ENCODE measurements at regions of chr9 and their contacts with region 1.

Region 1: GRCh38 chr9:89428901-89429890 is 68.7 kb downstream of the SEMA4D start:
- DNase-seq: peak; percentile 91
- H3K4me3 ChIP-seq: no peak overlapping the region
- H3K27ac ChIP-seq: no peak overlapping the region
- H3K4me1 ChIP-seq: peaks cover 71% of the 10 kb centered on the region
- CTCF ChIP-seq: peak; percentile 97

Region 2: DNA sequence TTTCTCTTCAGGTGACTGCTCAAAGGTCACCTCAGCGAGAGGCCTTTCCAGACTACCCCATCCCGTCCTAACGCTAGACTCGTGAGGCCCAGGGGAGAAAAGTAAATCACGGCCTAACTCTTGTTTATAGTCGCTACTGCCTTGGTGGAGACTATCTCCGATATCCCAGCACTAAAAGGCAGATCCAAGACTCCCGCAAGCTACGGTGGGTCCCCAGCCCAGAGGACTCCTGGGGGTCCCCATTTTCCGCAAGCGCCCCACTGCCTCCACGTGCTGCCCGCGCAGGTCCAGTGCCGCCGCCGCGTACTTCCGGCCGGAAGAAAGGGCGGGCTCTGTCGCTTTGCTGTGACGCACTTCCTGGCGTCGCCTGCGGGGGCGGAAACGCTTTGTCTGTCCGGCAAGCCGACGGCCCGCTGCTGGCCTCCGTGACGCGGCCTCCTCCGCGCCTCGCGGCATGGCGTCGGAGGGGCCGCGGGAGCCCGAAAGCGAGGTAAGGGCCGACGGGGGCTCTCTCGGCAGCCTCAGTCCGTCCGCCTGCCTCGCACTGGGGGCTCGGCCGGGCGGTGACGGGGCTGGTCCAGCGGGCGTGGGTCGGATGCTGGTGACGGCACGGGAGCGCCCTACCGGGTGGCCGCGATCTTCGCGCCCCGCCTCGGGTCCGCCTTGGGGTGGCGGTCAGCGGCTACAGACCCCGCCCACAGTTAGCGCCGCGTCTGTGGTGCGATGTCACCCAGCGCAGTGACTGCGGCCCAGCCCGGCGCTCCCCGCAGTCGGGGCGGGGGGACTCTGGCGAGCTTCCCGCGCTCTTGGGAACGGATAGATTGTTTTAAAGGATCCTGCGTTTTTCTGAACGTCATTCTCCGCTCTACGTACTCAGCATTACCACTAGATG is 110.8 kb before region 1 on chr9 and contains the start of gene SECISBP2:
- CTCF ChIA-PET with region 1: no interaction called
- POLR2A ChIA-PET with region 1: no interaction called
- intact Hi-C with region 1: loop called (anchors 2 kb)
- DNase-seq: peak; percentile 95
- H3K4me3 ChIP-seq: peak within 1 kb of the TSS; percentile 77
- H3K27ac ChIP-seq: peak within 1 kb of the TSS; percentile 88
- H3K4me1 ChIP-seq: peaks cover 63% of the 10 kb centered on the region
- CTCF ChIP-seq: no peak
- total RNA-seq, gene SECISBP2: 76.1 and 77.6 TPM in 2 replicates

Region 3: DNA sequence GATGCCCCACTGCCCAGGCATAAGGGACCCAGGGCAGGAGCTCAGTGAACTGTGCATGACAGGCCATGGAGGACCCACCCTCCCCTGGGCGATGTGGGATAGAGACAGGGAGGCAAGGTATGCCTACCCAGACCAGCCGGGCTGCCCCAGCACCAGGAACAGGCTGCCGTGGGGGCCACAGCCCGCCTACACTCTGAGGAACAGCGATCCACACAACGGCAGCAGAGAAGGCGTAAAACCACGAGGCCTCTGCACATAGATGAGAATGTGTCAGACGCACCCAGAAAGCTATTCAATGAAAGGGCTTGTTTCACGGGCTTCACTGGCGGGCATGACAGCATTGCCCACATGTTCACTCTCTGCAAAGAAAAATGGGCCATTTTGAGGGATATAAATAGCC is 19.2 kb after region 1 on chr9:
- CTCF ChIA-PET with region 1: interaction called, 19 read pairs
- POLR2A ChIA-PET with region 1: interaction called, 5 read pairs
- intact Hi-C with region 1: no loop called
- DNase-seq: no peak
- H3K4me3 ChIP-seq: no peak overlapping the region
- H3K27ac ChIP-seq: no peak overlapping the region
- H3K4me1 ChIP-seq: peaks cover 35% of the 10 kb centered on the region
- CTCF ChIP-seq: no peak

Region 4: DNA sequence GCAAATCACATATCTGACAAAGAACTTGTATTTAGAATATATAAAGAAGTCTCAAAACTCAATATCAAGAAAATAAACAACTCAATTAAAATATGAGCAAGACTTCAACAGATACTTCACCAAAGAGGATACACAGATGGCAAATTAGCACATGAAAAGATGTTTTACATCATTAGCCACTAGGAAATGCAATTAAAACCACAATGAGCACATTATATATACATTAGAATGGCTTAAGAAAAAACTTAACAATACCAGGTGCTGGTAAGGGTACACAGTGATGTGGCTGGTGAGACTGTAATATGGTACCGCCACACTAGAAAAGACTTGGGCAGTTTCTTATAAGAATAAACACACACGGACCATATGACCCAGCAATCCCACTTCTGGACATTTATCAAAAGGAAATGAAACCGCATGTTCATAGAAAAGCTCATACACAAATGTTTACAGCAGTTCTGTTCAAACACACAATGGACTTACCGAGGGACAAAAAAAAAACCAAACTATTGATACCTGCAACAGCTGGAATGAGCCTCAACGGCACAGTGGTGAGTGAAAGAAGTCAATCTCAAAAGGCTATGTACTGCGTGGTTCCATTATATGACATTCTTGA is 41.1 kb after region 1 on chr9:
- CTCF ChIA-PET with region 1: no interaction called
- POLR2A ChIA-PET with region 1: no interaction called
- intact Hi-C with region 1: no loop called
- DNase-seq: peak; percentile 13
- H3K4me3 ChIP-seq: no peak overlapping the region
- H3K27ac ChIP-seq: no peak overlapping the region
- H3K4me1 ChIP-seq: peaks cover 48% of the 10 kb centered on the region
- CTCF ChIP-seq: no peak

Region 5: GRCh38 chr9:89483592-89484522 is 54.7 kb after region 1 on chr9:
- CTCF ChIA-PET with region 1: no interaction called
- POLR2A ChIA-PET with region 1: no interaction called
- intact Hi-C with region 1: loop called (anchors 5 kb)
- DNase-seq: peak; percentile 72
- H3K4me3 ChIP-seq: peak overlapping the region; percentile 64
- H3K27ac ChIP-seq: no peak overlapping the region
- H3K4me1 ChIP-seq: peaks cover 60% of the 10 kb centered on the region
- CTCF ChIP-seq: no peak

Region 6: GRCh38 chr9:89497978-89498851 is 69.0 kb after region 1 on chr9 and contains the start of gene SEMA4D:
- CTCF ChIA-PET with region 1: interaction called, 3 read pairs
- POLR2A ChIA-PET with region 1: interaction called, 3 read pairs
- intact Hi-C with region 1: loop called (anchors 2 kb)
- DNase-seq: peak; percentile 67
- H3K4me3 ChIP-seq: peak within 1 kb of the TSS; percentile 83
- H3K27ac ChIP-seq: peak within 1 kb of the TSS; percentile 35
- H3K4me1 ChIP-seq: peaks cover 54% of the 10 kb centered on the region
- CTCF ChIP-seq: no peak
- total RNA-seq, gene SEMA4D: 28.5 and 33.7 TPM in 2 replicates

Region 7: GRCh38 chr9:89549031-89549644 is 119.9 kb after region 1 on chr9:
- CTCF ChIA-PET with region 1: interaction called, 45 read pairs
- POLR2A ChIA-PET with region 1: interaction called, 25 read pairs
- intact Hi-C with region 1: loop called (anchors 1 kb)
- DNase-seq: peak; percentile 85
- H3K4me3 ChIP-seq: no peak overlapping the region
- H3K27ac ChIP-seq: no peak overlapping the region
- H3K4me1 ChIP-seq: peaks cover 32% of the 10 kb centered on the region
- CTCF ChIP-seq: peak; percentile 99

Region 8: DNA sequence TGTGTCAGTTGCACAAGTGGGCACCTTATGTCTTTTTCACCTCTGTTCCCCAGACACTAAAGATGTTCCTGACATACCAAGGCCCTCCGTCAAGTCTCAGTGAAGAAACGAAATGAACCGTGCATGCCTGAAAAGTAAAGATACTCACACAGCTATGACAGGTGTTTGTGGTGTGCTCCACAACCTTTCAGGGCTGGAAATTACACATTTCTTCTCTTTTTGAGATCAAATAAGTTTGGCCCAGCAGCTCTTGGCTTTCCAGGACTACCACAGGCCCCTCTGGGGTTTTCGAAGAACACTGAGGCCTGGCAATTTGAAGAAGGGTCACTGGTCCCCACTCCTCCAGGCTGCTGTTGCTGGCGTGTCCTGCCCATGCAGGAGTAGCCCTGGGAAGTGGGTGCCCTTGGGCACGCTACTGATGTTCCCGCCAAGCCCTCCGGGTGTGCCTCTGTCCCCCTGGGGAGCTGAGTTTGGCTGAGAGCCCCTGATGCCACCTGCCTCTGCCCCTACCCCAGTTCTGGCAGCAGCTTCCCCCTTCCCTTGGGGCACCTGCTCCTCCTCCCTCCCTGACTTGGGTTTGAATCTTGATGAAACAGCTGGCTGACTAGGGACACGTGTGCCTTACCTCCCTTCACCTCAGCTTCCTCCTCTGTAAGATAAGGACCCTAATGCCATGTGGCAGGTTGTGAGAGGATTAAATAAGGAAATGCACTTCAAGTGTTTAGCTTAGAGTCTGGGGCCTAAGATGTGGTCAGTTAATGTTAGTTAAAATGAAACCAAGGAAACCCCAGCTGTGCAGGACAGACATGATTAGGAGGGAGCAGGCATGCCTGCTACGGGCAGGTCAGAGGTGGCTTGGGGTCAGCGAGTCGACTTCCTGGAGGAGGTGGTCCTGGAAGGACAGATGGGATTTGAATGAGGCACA is 126.5 kb after region 1 on chr9:
- CTCF ChIA-PET with region 1: interaction called, 45 read pairs
- POLR2A ChIA-PET with region 1: interaction called, 3 read pairs
- intact Hi-C with region 1: no loop called
- DNase-seq: peak; percentile 81
- H3K4me3 ChIP-seq: no peak overlapping the region
- H3K27ac ChIP-seq: peak overlapping the region; percentile 29
- H3K4me1 ChIP-seq: peaks cover 38% of the 10 kb centered on the region
- CTCF ChIP-seq: no peak

Region 9: GRCh38 chr9:89634995-89635742 is 206.0 kb after region 1 on chr9:
- CTCF ChIA-PET with region 1: no interaction called
- POLR2A ChIA-PET with region 1: no interaction called
- intact Hi-C with region 1: no loop called
- DNase-seq: no peak
- H3K4me3 ChIP-seq: no peak overlapping the region
- H3K27ac ChIP-seq: no peak overlapping the region
- H3K4me1 ChIP-seq: no peaks in the 10 kb centered on the region
- CTCF ChIP-seq: no peak